ENCODE measurements at regions of chr12 and their contacts with region 1.

Region 1: DNA sequence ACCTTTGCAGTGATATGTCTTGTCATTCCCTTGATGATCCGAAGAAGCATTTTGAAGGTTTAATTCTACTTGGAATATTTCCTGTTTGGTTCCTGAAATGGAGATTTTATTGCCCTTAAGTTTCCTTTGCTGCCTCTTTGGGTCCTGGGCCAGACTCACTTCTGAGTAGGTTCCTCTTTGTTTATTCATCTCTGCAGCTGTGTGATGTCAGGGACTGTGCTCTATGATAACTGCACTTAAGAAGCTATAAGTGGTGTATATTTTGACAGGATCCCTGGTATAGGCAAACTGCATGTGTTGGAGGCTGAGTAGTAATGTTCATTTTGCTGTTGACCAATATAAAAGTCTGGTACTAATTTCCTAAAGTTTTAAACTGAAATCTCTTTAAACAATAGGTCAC is at the start of gene KLRC4:
- DNase-seq: no peak
- ATAC-seq: no peak
- H3K4me3 Mint-ChIP-seq: no peak within 1 kb of the TSS
- H3K27ac Mint-ChIP-seq: peak within 1 kb of the TSS; percentile 34; the same call in 1 of the 2 replicates
- H3K4me1 Mint-ChIP-seq: peaks cover 17% of the 10 kb centered on the region
- H3K27me3 Mint-ChIP-seq: no peaks in the 10 kb centered on the region; the same call in 1 of the 2 replicates
- CTCF ChIP-seq: no peak
- total RNA-seq, gene KLRC4: not detected in 3 replicates

Region 2: DNA sequence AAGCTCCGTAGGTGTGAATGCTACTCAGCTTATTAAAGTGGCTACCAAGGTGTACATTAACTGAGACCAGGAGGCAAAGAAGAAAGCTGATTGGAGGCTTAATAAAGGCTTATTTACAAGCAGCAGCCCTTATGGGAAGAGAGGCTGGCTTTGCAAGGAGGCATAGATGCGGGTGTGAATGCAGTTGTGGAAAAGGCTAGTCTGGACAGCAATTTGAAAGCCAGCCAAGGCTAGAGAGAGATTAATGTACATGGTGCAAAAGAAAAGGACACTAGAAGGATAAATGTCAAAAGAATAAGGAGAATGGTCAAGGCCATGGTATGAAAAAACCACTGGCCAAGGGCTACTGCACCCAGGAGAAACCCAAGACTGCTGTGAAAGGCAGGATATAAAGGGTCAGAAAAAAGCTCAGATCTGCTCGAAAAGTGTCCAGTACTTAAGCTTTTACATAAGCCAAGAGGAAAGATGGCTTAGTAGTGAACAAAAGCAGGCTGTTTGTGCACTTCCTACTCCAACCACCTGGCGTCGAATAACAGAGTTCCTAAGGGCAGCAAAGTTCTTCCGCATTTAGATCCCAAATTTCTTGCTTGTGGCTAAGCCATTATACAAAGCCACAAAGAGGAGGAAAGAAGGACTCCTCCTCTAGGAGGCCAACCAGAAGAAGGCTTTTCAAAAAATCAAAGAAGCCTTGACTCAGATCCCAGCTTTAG is 43.5 kb before region 1 on chr12:
- CTCF ChIA-PET with region 1: interaction called, 12 read pairs
- POLR2A ChIA-PET with region 1: no interaction called
- DNase-seq: no peak
- ATAC-seq: no peak
- H3K4me3 Mint-ChIP-seq: no peak overlapping the region
- H3K27ac Mint-ChIP-seq: no peak overlapping the region
- H3K4me1 Mint-ChIP-seq: peaks cover 35% of the 10 kb centered on the region
- H3K27me3 Mint-ChIP-seq: no peaks in the 10 kb centered on the region
- CTCF ChIP-seq: no peak